H1 (cell line): ENCODE measurements at regions of chr16 and their contacts with region 1.

Region 1: DNA sequence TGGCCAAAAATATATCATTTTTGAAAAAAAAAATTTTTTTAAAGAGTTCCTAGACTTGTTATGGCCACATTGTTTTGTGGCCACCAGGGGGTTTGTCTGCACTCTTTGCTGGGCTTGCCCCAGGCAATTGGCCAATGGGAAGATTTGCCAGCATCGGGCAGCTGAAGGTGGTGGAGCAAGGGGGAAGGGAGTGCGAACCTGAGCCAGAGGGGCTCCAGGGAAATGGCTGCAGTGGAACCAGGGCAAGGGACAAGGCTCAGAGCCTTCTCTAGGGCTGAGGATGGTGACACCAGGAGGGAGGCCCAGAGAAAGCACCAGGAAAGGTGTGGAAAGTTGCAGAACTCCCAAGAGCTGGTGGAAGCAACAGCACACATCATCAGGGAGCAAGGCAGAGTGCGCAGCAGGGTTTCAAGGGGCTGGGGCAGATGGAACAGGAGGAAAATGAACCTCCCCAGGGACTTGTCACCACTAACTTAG is 15.5 kb upstream of the CMIP start:
- DNase-seq: no peak
- H3K4me3 ChIP-seq: no peak overlapping the region
- H3K27ac ChIP-seq: no peak overlapping the region
- H3K4me1 ChIP-seq: peaks cover 0 to 9% (median under 1%) of the 10 kb centered on the region in 4 experiments; a peak in 3 of 7 replicates
- H3K27me3 ChIP-seq: no peaks in the 10 kb centered on the region
- CTCF ChIP-seq: peak; percentile 34 to 54 (median 50)
- EP300 ChIP-seq: no peak
- POLR2A ChIP-seq: no peak
- RAD21 ChIP-seq: peak; percentile 51 to 58

Region 2: GRCh38 chr16:81335669-81336068 is 93.4 kb before region 1 on chr16:
- CTCF ChIA-PET with region 1: no interaction called
- POLR2A ChIA-PET with region 1: no interaction called
- DNase-seq: no peak
- H3K4me3 ChIP-seq: no peak overlapping the region
- H3K27ac ChIP-seq: no peak overlapping the region
- H3K4me1 ChIP-seq: no peaks in the 10 kb centered on the region
- H3K27me3 ChIP-seq: no peaks in the 10 kb centered on the region
- CTCF ChIP-seq: no peak
- EP300 ChIP-seq: no peak
- POLR2A ChIP-seq: no peak
- RAD21 ChIP-seq: no peak

Region 3: GRCh38 chr16:81440888-81441761 is 12.0 kb after region 1 on chr16:
- CTCF ChIA-PET with region 1: interaction called, 26 read pairs
- POLR2A ChIA-PET with region 1: interaction called, 4 read pairs
- DNase-seq: no peak
- H3K4me3 ChIP-seq: no peak overlapping the region
- H3K27ac ChIP-seq: no peak overlapping the region
- H3K4me1 ChIP-seq: peaks cover 0 to 8% (median 0%) of the 10 kb centered on the region in 4 experiments; a peak in 4 of 7 replicates
- H3K27me3 ChIP-seq: peaks cover 0 to 3% (median 1%) of the 10 kb centered on the region in 4 experiments; a peak in 3 of 7 replicates
- CTCF ChIP-seq: no peak
- EP300 ChIP-seq: no peak
- POLR2A ChIP-seq: no peak
- RAD21 ChIP-seq: no peak

Region 4: DNA sequence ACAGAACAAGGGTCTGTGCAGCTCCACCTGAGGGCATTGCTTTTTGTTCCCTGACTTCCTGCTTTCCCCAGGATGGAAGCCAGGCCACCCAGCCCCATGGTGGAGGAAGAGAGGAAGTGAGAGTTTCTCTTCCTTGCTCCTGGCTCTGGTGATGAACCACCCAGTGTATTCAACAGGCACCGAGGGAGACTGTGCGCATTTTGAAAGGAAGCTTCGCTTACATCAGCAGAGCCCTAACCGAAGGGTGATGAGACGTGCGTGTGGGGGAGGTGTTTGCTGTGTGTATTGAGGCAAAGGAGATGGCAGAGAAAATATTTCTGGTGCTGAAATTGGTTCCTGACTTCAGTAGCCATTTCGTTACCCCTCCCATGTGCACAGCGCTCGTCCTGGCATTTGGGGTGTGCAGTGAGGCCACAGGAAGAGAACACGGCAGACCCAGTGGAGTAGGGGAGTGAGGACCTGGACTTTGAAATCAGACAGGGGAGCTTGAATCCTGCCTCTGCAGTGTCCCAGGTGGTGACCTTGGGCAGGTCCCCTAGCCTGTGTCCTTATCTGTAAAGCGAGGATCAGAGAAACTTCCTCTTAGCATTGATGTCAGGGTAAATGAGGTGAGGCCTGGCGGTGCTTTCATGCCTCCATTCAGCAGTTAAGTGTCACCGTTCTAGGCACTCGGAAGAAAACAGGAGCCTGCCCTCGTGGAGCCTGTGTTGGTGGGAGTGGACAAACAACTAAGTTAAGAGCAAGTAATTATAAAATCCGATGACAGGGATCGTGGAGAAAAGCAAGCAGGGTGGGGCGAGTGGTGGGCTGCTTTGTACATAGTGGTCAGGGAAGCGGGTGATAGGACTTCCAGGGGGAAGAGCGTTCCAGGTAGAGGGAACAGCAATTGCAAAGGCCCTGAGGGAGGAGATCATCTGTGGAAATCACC is 22.9 kb after region 1 on chr16:
- CTCF ChIA-PET with region 1: interaction called, 12 read pairs
- POLR2A ChIA-PET with region 1: interaction called, 3 read pairs
- DNase-seq: no peak
- H3K4me3 ChIP-seq: no peak overlapping the region
- H3K27ac ChIP-seq: no peak overlapping the region
- H3K4me1 ChIP-seq: peaks cover 4 to 49% (median 27%) of the 10 kb centered on the region in 4 experiments
- H3K27me3 ChIP-seq: no peaks in the 10 kb centered on the region
- CTCF ChIP-seq: no peak
- EP300 ChIP-seq: no peak
- POLR2A ChIP-seq: no peak
- RAD21 ChIP-seq: no peak